AG04450 (cell line): ENCODE measurements at regions of chr12 and their contacts with region 1.

Region 1: GRCh38 chr12:78612190-78612589 is 252.4 kb upstream of the SYT1 start:
- DNase-seq: no peak
- H3K4me3 ChIP-seq: no peak overlapping the region
- H3K27ac ChIP-seq: no peak overlapping the region
- H3K27me3 ChIP-seq: no peaks in the 10 kb centered on the region
- CTCF ChIP-seq: no peak

Region 2: GRCh38 chr12:78711954-78712353 is 99.8 kb after region 1 on chr12:
- CTCF ChIA-PET with region 1: no interaction called
- POLR2A ChIA-PET with region 1: interaction called, 10 read pairs
- DNase-seq: no peak
- H3K4me3 ChIP-seq: no peak overlapping the region
- H3K27ac ChIP-seq: no peak overlapping the region
- H3K27me3 ChIP-seq: no peaks in the 10 kb centered on the region
- CTCF ChIP-seq: no peak